HepG2 (cell line): ENCODE measurements at regions of chr9 and their contacts with region 1.

Region 1: DNA sequence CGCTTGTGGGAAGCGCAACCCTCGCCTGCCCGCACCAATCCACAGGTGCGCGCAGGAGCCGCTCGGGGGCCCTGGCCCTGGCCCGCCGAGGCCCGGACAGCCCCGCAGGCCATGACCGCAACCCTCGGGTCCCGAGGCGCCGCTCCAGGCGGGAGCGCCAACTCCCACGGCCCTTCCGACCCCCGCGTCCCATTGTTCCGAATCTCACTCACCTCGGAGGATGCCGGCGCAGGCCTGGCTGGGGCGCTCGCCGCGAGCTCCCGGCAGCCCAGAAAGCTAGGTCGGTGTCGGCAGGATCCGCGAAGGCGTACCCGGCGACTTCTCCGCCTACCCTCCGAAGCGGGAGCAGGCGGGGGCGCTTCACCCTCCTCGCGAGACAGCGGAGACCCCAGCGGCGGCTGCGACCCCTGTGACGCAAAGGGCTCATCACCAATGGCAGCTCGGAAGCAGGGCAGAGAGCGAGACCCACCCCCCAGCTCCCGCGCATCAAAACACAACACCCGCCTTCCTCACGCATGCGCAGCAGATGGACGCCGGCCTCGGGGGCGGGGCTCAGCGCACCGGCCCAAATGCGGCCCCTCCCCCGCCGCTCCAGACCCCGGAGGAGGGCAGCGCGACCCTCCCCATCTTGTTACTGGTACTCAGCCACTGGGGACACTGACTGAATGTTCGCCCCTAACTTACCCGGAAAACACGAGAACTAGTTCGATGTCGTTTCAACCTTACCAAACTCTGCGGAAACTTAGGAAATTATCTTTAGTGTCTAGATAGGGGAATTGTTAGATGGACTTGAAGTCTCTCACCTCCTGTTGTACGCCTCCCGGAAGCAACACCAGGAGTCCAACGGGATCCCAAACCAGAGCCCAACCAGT is 1.3 kb upstream of the SMIM27 start:
- DNase-seq: peak; percentile 93
- ATAC-seq: peak; percentile 89
- H3K4me3 ChIP-seq: peak overlapping the region; percentile 89 to 91 (median 90)
- H3K27ac ChIP-seq: peak overlapping the region; percentile 96
- H3K4me1 ChIP-seq: peaks cover 34% of the 10 kb centered on the region
- H3K27me3 ChIP-seq: no peaks in the 10 kb centered on the region; a peak in 1 of 5 replicates
- CTCF ChIP-seq: peak; percentile 39
- EP300 ChIP-seq: no peak; a peak in 1 of 4 replicates
- POLR2A ChIP-seq: peak; percentile 56 to 63
- RAD21 ChIP-seq: peak; percentile 67

Region 2: GRCh38 chr9:32463500-32464293 is 87.1 kb before region 1 on chr9:
- CTCF ChIA-PET with region 1: no interaction called
- POLR2A ChIA-PET with region 1: no interaction called
- in situ Hi-C with region 1: no loop called
- intact Hi-C with region 1: no loop called
- DNase-seq: no peak
- ATAC-seq: peak; percentile 82
- H3K4me3 ChIP-seq: no peak overlapping the region
- H3K27ac ChIP-seq: no peak overlapping the region
- H3K4me1 ChIP-seq: peaks cover 6% of the 10 kb centered on the region; the same call in 1 of the 2 replicates
- H3K27me3 ChIP-seq: no peaks in the 10 kb centered on the region
- CTCF ChIP-seq: no peak
- EP300 ChIP-seq: no peak
- POLR2A ChIP-seq: no peak
- RAD21 ChIP-seq: no peak

Region 3: DNA sequence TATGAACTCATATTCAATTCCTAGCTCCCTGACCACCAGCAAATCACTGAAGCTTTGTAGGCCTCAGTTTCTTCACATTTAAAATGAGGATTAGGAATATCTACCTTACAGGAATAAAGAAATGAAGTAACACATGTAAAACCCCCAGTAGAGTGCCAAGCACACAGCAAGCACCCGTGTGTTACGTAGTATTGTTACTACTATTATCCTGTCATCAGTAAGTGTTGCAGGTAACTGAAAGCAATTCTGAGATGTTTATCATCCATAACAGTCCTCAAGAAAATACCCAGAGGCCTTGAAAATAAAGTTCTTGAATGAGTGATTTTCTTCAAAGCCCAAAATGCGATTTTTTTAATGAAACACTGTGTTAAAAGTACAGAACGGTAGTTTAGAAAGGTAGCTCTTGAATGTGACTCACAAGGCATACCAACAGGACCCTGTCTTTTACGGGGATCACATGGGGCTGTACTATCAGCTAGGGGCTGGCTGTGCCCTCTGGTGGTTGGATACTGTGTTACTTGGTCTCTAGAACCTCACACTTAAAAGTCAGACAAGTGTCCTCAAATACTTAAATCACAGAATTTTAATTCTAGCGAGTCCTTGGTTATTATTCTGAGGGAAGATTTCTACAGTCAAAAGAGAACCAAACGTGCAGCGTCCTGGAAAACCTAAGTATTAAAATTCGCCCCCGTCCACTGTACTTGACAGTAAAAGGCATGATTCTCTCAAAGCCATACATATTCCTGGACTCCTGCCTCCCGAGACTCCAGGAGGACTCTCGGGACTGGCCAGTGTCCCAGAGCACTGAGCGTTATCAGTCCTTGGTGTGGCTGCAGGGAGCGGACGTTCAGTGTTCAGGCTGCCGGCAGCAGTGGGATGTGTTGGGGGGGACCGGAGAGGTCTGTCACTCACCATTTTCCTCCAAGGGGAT is 21.4 kb after region 1 on chr9:
- CTCF ChIA-PET with region 1: interaction called, 3 read pairs
- POLR2A ChIA-PET with region 1: interaction called, 36 read pairs
- in situ Hi-C with region 1: no loop called
- intact Hi-C with region 1: no loop called
- DNase-seq: peak; percentile 83
- ATAC-seq: peak; percentile 96
- H3K4me3 ChIP-seq: peak overlapping the region; percentile 81 to 95 (median 83)
- H3K27ac ChIP-seq: peak overlapping the region; percentile 77
- H3K4me1 ChIP-seq: peaks cover 24% of the 10 kb centered on the region
- H3K27me3 ChIP-seq: no peaks in the 10 kb centered on the region; a peak in 1 of 5 replicates
- CTCF ChIP-seq: peak; percentile 78
- EP300 ChIP-seq: no peak
- POLR2A ChIP-seq: no peak
- RAD21 ChIP-seq: peak; percentile 26; the same call in 1 of the 2 replicates